Ascending aorta (tissue), 2 donors: ENCODE measurements at regions of chr11 and their contacts with region 1.

Region 1: DNA sequence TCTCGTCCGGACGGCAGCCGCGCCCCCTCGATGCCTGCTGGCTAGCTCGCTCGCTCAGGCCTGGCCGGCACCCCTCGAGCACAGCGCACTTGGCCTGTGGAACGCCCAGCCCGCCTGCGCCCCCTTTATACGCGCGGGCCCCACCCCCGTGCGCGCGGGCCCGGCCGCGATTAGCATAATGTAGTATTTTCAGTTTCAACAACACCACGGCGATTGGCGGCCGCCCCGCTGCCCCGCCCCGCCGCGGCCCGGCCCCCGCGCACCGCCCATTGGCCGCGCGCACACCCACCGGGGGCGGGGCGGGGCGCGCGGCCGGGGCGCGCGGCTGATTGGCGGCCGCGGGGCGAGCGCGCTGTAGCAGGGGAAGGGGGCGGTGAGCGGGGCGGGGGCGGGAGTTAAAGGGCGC is at the start of gene CDKN1C:
- DNase-seq: peak; percentile 61 to 95
- H3K4me3 ChIP-seq: peak within 1 kb of the TSS; percentile 89 to 95
- H3K27ac ChIP-seq: peak within 1 kb of the TSS; percentile 80 to 86
- H3K4me1 ChIP-seq: peaks cover 0 to 17% of the 10 kb centered on the region in 2 donors
- H3K27me3 ChIP-seq: no peaks in the 10 kb centered on the region
- CTCF ChIP-seq: no peak
- total RNA-seq, gene CDKN1C: 18.1 TPM

Region 2: GRCh38 chr11:2314525-2315394 is 570.9 kb before region 1 on chr11:
- intact Hi-C with region 1: loop called (anchors 5 kb)
- DNase-seq: peak in 1 of 2 donors; percentile 93
- H3K4me3 ChIP-seq: peak overlapping the region in 1 of 2 donors; percentile 36
- H3K27ac ChIP-seq: peak overlapping the region; percentile 80 to 82
- H3K4me1 ChIP-seq: peaks cover 8 to 19% of the 10 kb centered on the region in 2 donors
- H3K27me3 ChIP-seq: no peaks in the 10 kb centered on the region
- CTCF ChIP-seq: no peak

Region 3: GRCh38 chr11:2532704-2533586 is 352.7 kb before region 1 on chr11:
- intact Hi-C with region 1: loop called (anchors 1 kb)
- DNase-seq: peak; percentile 38 to 93
- H3K4me3 ChIP-seq: peak overlapping the region; percentile 34 to 45
- H3K27ac ChIP-seq: no peak overlapping the region
- H3K4me1 ChIP-seq: peaks cover 0 to 3% of the 10 kb centered on the region in 2 donors
- H3K27me3 ChIP-seq: no peaks in the 10 kb centered on the region
- CTCF ChIP-seq: peak; percentile 98 to 99 (median 98)

Region 4: DNA sequence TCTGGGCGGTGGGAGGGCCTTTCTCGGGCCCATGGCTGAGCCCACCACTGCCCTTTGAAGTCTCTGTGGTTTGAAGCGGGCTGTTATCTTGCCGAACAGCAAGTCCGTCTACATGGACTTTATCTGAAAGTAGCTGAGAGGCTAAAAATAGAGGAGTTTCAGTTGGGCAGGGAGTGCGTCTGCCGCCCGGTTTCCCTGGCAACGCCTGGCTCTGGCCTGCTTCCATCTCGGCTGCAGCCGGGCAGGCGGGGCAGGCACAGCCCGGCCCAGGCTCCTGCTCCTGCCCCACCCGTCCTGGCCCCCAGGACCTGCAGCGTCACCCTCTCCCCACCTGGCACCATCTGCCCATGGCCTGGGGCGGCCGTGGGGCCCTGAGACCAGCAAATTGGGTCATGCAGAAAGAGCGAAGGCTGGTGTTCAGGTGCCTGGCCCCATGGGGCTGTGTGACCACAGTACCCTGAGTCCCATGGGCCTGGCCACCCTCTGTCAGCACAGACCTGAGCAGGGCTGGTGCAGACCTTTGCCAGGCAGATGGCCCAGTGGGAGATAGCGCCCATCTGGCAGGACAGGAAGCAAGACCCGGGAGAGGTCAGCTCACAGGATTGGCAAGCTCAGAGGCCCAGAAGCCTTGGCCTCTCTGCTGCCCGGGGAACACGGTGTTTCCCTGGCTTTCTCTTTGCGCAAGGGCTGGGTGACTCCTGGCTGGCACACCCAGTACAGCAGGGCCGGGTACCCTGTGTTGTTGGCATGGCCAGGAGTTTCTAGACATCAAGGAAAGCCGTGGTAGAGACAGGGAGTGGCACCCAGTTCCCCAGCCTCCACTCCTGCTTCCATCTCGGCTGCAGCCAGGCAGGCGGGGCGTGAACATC is 106.8 kb before region 1 on chr11:
- intact Hi-C with region 1: loop called (anchors 1 kb)
- DNase-seq: peak; percentile 47 to 89
- H3K4me3 ChIP-seq: peak overlapping the region; percentile 18 to 53
- H3K27ac ChIP-seq: peak overlapping the region; percentile 68 to 81
- H3K4me1 ChIP-seq: peaks cover 11 to 36% of the 10 kb centered on the region in 2 donors
- H3K27me3 ChIP-seq: no peaks in the 10 kb centered on the region
- CTCF ChIP-seq: peak in 2 of 3 experiments; percentile 13 to 52

Region 5: GRCh38 chr11:2901854-2902783 is 16.4 kb after region 1 on chr11:
- intact Hi-C with region 1: loop called (anchors 1 kb)
- DNase-seq: peak; percentile 85 to 97
- H3K4me3 ChIP-seq: peak overlapping the region; percentile 69 to 93
- H3K27ac ChIP-seq: peak overlapping the region; percentile 72 to 84
- H3K4me1 ChIP-seq: peaks cover 0 to 17% of the 10 kb centered on the region in 2 donors
- H3K27me3 ChIP-seq: no peaks in the 10 kb centered on the region
- CTCF ChIP-seq: no peak